ENCODE measurements at regions of chr22 and their contacts with region 1.

Region 1: GRCh38 chr22:28594797-28595462 is 84.7 kb downstream of the TTC28 start:
- DNase-seq: no peak
- H3K4me3 ChIP-seq: peak overlapping the region in 2 of 59 donors; percentile 8 to 21
- H3K27ac ChIP-seq: peak overlapping the region in 2 of 59 donors; percentile 10 to 34
- H3K27me3 ChIP-seq: no peaks in the 10 kb centered on the region
- CTCF ChIP-seq: peak; percentile 57 to 97 (median 85)

Region 2: DNA sequence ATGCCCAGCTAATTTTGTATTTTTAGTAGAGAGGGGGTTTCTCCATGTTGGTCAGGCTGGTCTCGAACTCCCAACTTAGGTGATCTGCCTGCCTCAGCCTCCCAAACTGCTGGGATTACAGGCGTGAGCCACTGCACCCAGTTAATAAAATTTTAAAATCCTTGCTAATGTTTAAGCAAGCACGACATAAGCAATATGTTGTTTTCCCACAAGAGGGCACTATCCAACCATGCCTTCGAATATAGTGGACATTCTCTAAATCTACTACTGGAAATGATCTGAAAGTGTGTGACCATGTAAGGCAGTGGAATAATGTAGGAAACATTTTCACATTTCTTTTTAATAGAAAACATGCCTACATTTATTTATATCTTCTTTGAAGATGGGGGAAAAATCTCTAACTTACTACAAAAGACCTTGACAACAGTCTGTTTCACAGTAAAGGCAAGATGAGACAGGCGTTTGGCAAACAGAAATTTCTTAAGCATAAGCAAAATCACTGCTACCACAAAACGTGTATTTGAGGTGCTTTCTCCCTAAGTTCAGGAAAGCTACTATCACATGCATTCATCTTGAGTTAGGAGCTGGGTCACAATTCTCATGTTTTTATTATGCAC is 714.0 kb before region 1 on chr22:
- intact Hi-C with region 1: loop called (anchors 5 to 10 kb)
- DNase-seq: peak in 2 of 10 donors; percentile 33 to 61
- H3K4me3 ChIP-seq: peak overlapping the region in 34 of 59 donors; percentile 1 to 48 (median 23)
- H3K27ac ChIP-seq: peak overlapping the region; percentile 71 to 96 (median 87)
- H3K27me3 ChIP-seq: no peaks in the 10 kb centered on the region
- CTCF ChIP-seq: peak; percentile 65 to 90 (median 84)

Region 3: DNA sequence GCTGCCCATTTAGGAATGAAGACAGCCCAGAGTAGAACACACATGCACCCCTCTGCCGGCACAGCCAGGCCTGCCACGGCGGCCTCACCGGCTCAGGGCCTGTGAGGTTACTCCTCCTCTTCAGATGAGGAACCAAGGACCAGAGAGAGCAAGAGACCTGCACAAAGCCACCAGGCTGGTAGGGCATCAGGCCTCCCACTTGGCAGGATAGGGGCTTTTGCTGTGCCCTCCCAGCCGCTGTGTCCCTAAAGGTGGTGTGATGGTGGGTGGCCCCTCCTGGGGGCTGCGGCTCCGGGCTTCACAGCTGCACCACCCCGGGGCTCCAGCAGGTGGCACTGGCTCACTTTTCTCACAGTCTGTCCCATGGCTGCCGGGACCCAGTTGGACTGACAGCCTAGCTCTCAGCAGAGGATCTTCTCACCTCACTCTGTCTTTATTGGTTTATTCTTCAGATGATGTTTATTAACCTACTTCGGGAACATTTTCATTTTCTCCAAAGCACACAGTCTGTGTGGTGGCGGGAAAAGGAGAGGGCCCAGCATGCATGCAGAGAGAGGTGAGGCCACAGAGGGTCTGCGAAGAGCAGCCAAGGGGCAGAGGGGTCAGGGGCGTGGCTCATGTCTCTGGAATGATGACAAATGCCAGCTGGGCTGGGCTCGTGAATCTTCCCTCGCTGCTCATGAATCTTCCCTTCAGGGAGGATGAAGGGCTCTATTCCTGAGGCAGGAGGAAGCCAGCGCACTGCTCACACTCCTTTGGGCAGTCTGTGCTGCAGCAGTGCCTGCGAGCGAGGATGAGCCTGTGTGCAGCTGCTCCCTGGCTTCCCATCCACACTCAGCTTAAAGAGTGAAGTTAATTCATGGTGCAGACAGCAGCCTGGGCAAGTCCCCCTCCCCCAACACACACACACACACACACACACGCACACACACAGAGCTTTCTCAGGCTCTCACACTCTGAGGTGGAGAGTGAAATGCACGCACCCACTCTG is 574.8 kb before region 1 on chr22:
- intact Hi-C with region 1: loop called (anchors 2 to 10 kb)
- DNase-seq: peak; percentile 65 to 88 (median 78)
- H3K4me3 ChIP-seq: peak overlapping the region in 19 of 59 donors; percentile 2 to 42 (median 20)
- H3K27ac ChIP-seq: peak overlapping the region in 43 of 59 donors; percentile 10 to 83 (median 55)
- H3K27me3 ChIP-seq: no peaks in the 10 kb centered on the region
- CTCF ChIP-seq: peak; percentile 81 to 99 (median 97)

Region 4: DNA sequence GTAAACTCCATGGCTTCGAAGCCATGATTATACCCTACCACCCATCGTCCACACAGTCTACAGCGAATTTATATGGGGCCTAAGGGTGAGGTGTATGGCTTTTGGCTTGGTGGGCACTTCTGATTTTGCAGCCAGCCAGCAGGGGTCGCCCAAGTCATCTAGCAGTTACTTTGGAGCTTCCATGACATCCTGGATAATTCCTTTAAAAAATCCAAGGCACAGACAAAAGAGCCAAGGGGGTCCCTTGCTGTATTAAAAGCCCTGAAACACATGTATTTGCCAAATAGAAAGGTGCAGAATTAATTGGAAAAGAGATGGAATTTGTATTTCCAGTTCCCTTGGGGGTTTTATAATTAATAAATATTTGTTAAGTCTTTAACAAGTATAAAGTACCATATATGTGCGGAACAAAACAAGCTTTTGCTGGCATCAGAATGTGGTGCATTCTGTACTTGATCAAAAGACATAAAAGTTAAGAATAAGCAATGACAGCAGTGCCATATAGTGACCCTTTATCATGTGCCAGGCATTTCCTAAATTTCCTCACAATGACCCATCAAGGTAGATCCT is 543.1 kb before region 1 on chr22:
- intact Hi-C with region 1: loop called (anchors 1 to 5 kb)
- DNase-seq: peak; percentile 25 to 80 (median 73)
- H3K4me3 ChIP-seq: no peak overlapping the region
- H3K27ac ChIP-seq: no peak overlapping the region
- H3K27me3 ChIP-seq: no peaks in the 10 kb centered on the region
- CTCF ChIP-seq: peak; percentile 66 to 95 (median 88)

Region 5: GRCh38 chr22:28252539-28252938 is 342.4 kb before region 1 on chr22:
- intact Hi-C with region 1: loop called in 1 of 2 experiments (anchors 10 kb)
- DNase-seq: no peak
- H3K4me3 ChIP-seq: no peak overlapping the region
- H3K27ac ChIP-seq: no peak overlapping the region
- H3K27me3 ChIP-seq: no peaks in the 10 kb centered on the region
- CTCF ChIP-seq: no peak

Region 6: GRCh38 chr22:28442264-28442710 is 152.6 kb before region 1 on chr22:
- intact Hi-C with region 1: loop called in 1 of 2 experiments (anchors 5 kb)
- DNase-seq: peak; percentile 25 to 88 (median 76)
- H3K4me3 ChIP-seq: peak overlapping the region; percentile 41 to 90 (median 72)
- H3K27ac ChIP-seq: peak overlapping the region in 58 of 59 donors; percentile 5 to 91 (median 73)
- H3K27me3 ChIP-seq: no peaks in the 10 kb centered on the region
- CTCF ChIP-seq: peak; percentile 34 to 91 (median 79)

Region 7: DNA sequence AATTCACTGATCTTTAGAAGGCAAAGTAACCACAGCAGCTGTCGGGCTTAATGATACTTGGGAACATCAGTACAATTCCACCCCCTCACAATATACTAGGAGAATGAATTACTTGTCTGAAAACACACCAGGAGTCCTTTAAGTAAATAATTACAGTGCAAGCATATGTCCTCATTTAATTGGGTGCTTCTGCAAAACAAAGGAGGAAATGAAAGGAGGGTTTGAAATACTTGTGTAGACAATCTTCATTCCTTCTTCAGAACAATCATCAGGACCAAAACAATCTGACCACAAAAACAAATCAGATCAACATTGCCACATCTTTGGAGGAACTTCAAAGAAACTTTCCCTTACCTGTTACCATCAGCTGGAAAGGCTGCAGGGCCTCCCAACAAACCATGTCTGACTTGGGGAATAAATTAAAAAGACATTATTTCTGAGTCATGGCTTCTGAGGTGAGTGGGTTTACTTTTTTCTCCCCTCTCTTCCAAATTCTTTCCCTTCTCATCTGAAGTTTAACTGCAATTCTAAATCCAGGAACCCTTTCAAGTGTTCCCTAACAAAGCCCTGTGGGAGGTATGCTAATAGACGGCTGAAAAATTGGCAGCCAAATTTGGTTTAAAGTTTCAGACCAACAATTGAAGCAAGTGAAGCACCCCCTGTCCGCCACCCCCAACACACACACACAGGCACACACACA is 165.1 kb after region 1 on chr22:
- intact Hi-C with region 1: no loop called
- DNase-seq: no peak
- H3K4me3 ChIP-seq: peak overlapping the region in 3 of 59 donors; percentile 12 to 16 (median 13)
- H3K27ac ChIP-seq: no peak overlapping the region
- H3K27me3 ChIP-seq: no peaks in the 10 kb centered on the region
- CTCF ChIP-seq: no peak